ENCODE measurements at regions of chr17 and their contacts with region 1.

Region 1: DNA sequence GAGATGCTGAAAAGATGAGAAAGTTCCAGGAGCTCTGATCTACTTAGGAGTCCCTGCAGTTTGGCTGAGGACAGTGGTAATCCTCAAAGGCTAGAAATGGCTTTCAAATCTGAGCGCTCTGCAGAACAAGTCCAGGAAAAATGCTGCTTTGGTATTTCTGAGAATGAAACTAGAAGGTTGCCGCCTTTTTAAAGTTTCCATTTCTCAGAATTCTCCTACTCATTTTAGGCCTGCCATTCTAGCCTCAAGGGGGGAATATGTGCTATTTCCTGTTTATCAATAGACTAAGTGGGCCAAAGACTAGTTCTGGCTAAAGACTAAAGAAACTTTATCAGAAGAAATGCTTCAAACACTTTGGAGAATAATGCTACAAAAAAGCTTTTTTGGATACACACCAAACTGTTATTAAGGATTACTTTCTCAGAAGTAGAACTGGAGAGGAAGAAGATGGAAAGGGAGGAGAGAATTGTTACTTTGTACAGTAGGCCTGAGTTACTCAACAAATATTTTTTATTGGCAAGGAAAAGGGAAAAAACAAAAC is at the start of gene SLFN12L:
- DNase-seq: no peak

Region 2: GRCh38 chr17:35312790-35313711 is 224.6 kb before region 1 on chr17:
- CTCF ChIA-PET with region 1: interaction called, 15 read pairs
- POLR2A ChIA-PET with region 1: no interaction called
- DNase-seq: peak; percentile 33

Region 3: DNA sequence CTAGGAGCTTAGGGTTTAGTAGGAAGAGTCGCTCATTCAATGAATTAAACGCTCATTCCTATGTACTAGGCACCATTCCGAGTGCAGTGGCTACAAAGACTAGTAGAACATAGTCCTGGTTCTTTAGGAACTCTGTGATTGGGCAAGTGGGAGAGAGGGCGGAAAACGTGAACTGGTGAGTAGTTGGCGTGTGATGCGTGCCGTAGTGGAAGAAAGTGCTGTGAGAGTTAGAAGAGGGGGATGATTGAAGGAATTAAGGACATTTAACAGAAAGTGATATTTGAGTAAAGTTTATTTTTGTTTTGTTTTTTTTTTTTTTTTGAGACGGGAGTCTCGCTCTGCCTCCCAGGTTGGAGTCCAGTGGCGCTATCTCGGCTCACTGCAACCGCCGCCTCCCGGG is 30.9 kb after region 1 on chr17:
- CTCF ChIA-PET with region 1: no interaction called
- POLR2A ChIA-PET with region 1: no interaction called
- DNase-seq: peak; percentile 26

Measured in HEK293T (cell line).